ENCODE measurements at regions of chr12 and their contacts with region 1.

Region 1: GRCh38 chr12:119808441-119808840 is 68.7 kb downstream of the CIT start:
- DNase-seq: no peak
- H3K4me3 Mint-ChIP-seq: no peak overlapping the region
- H3K27ac Mint-ChIP-seq: no peak overlapping the region
- H3K4me1 Mint-ChIP-seq: peaks cover 9% of the 10 kb centered on the region
- H3K27me3 Mint-ChIP-seq: no peaks in the 10 kb centered on the region

Region 2: DNA sequence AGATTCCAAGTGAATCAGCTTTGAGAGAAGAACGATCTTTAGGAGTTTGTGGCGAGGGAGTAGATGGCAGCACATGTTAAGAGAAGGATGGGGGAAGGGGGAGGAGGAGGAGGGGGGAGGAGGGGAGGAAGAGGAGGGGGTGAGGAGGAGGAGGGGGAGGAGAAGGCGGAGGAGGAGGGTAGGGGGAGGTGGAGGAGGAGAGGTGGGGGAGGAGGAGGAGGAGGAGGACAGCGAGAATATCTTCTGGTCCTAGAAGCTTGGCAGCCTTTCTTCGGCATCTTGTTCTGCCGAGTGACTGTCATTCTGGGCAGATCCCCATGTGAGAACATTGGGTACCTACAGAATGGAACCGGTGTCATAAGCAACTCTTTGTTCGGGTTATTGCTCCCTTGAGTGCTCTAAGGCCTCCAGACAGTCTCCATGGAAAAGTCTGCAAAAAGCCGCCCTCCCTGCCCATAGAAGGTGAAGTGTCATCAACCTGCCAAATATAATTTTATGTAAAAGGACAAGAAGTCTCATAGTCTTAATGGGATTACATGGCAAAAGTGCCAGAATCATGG is 1785.1 kb before region 1 on chr12:
- CTCF ChIA-PET with region 1: no interaction called
- intact Hi-C with region 1: loop called (anchors 5 kb)
- DNase-seq: no peak
- H3K4me3 Mint-ChIP-seq: no peak overlapping the region
- H3K27ac Mint-ChIP-seq: no peak overlapping the region
- H3K4me1 Mint-ChIP-seq: peaks cover 8% of the 10 kb centered on the region
- H3K27me3 Mint-ChIP-seq: no peaks in the 10 kb centered on the region

Measured in activated naive CD4-positive, alpha-beta T cell treated with anti-CD3 and anti-CD28 coated beads for 36 hours (primary cell).